ENCODE measurements at regions of chr11 and their contacts with region 1.

Region 1: DNA sequence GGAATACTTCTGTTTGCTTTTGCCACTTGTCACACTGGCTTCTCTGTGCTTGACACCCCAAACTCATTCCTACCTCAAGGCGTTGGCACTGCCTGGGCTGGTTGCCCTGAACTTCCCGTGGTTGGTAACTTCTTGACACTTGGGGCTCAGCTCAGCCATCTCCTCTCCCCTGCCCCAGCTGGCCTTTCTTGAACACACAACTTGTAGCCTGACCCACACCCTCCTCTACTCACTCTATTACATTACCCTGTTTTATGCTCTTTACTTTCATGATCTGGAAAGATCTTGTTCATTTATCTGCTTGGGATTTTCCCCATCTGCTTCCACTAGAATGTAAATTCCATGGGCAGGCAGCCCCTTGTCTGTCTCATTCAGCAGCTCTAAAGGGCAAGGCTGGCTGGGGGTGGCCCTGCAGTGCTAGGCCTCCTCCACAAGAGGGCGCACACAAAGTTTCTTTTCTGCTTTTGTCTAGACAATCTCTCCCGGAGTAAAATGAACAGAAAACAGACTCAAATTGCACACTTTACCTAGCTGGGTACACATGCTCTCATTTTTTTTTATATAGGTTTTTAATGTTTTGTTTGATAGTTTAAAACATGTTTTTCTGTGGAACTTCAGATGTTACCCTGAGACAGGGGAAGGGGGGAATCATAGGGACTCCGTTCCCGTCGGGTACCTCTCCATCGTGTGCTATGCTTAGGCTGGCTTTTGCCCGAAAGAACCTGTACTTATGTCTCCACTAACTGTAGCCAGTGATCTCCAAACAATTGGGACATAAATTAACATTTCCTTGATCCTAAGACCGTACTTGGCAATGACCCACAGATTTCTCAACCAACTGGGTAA is 16.4 kb upstream of the MRGPRX2 start:
- DNase-seq: peak; percentile 39 to 44
- ATAC-seq: peak; percentile 67 to 87; a peak in 4 of 6 replicates
- H3K4me3 ChIP-seq: no peak overlapping the region
- H3K27ac ChIP-seq: no peak overlapping the region
- H3K4me1 ChIP-seq: no peaks in the 10 kb centered on the region
- CTCF ChIP-seq: peak; percentile 84
- EP300 ChIP-seq: no peak
- POLR2A ChIP-seq: no peak
- RAD21 ChIP-seq: peak; percentile 57 to 58

Region 2: GRCh38 chr11:19087658-19088057 is 10.7 kb after region 1 on chr11:
- CTCF ChIA-PET with region 1: interaction called, 22 read pairs
- POLR2A ChIA-PET with region 1: no interaction called
- DNase-seq: no peak
- ATAC-seq: no peak
- H3K4me3 ChIP-seq: no peak overlapping the region
- H3K27ac ChIP-seq: no peak overlapping the region
- H3K4me1 ChIP-seq: no peaks in the 10 kb centered on the region
- CTCF ChIP-seq: no peak
- EP300 ChIP-seq: no peak
- POLR2A ChIP-seq: no peak
- RAD21 ChIP-seq: no peak

Region 3: GRCh38 chr11:19101796-19102520 is 25.0 kb after region 1 on chr11:
- CTCF ChIA-PET with region 1: interaction called, 22 read pairs
- POLR2A ChIA-PET with region 1: no interaction called
- DNase-seq: no peak
- ATAC-seq: no peak
- H3K4me3 ChIP-seq: no peak overlapping the region
- H3K27ac ChIP-seq: no peak overlapping the region
- H3K4me1 ChIP-seq: peaks cover 10% of the 10 kb centered on the region; the same call in 2 of the 3 replicates
- CTCF ChIP-seq: no peak
- EP300 ChIP-seq: no peak
- POLR2A ChIP-seq: no peak
- RAD21 ChIP-seq: no peak

Region 4: GRCh38 chr11:19110280-19110679 is 33.3 kb after region 1 on chr11:
- CTCF ChIA-PET with region 1: interaction called, 17 read pairs
- POLR2A ChIA-PET with region 1: no interaction called
- DNase-seq: no peak
- ATAC-seq: no peak
- H3K4me3 ChIP-seq: no peak overlapping the region
- H3K27ac ChIP-seq: no peak overlapping the region
- H3K4me1 ChIP-seq: no peaks in the 10 kb centered on the region
- CTCF ChIP-seq: no peak
- EP300 ChIP-seq: no peak
- POLR2A ChIP-seq: no peak
- RAD21 ChIP-seq: no peak

Region 5: GRCh38 chr11:19259487-19260345 is 182.7 kb after region 1 on chr11:
- CTCF ChIA-PET with region 1: interaction called, 10 read pairs
- POLR2A ChIA-PET with region 1: no interaction called
- DNase-seq: peak; percentile 40 to 62
- ATAC-seq: peak; percentile 73 to 92; a peak in 5 of 6 replicates
- H3K4me3 ChIP-seq: no peak overlapping the region
- H3K27ac ChIP-seq: no peak overlapping the region
- H3K4me1 ChIP-seq: no peaks in the 10 kb centered on the region
- CTCF ChIP-seq: peak; percentile 89
- EP300 ChIP-seq: no peak
- POLR2A ChIP-seq: no peak
- RAD21 ChIP-seq: peak; percentile 83

Region 6: DNA sequence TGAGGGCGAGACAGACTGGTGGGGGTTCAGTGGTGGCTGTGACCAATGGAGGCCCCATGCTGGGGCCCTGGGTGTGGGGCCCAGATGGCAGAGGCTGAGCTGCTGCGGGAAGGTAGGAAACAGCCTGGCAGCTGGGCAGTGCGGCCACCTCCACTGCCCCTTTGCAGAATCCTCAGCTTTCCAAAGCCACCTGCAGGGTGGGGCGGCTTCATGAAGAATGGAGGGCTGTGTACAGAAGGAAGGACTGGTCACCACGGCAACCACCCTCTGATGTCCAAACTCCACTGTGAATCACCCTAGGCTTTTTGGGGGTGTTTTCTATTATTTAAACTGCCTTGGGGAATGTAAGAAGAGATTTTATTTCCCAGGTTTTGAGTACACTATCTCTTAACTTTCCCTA is 469.4 kb after region 1 on chr11:
- CTCF ChIA-PET with region 1: interaction called, 218 read pairs
- POLR2A ChIA-PET with region 1: no interaction called
- DNase-seq: peak in 1 of 2 experiments; percentile 9
- ATAC-seq: peak in 1 of 2 experiments; percentile 50; a peak in 2 of 6 replicates
- H3K4me3 ChIP-seq: no peak overlapping the region
- H3K27ac ChIP-seq: no peak overlapping the region
- H3K4me1 ChIP-seq: 0 out of 3 replicates have a peak, but pooled peaks cover 3% of the 10 kb centered on the region
- CTCF ChIP-seq: no peak
- EP300 ChIP-seq: no peak
- POLR2A ChIP-seq: no peak
- RAD21 ChIP-seq: no peak